Activated CD4-positive, alpha-beta memory T cell treated with anti-CD3 and anti-CD28 coated beads for 36 hours (primary cell): ENCODE measurements at regions of chr2 and their contacts with region 1.

Region 1: DNA sequence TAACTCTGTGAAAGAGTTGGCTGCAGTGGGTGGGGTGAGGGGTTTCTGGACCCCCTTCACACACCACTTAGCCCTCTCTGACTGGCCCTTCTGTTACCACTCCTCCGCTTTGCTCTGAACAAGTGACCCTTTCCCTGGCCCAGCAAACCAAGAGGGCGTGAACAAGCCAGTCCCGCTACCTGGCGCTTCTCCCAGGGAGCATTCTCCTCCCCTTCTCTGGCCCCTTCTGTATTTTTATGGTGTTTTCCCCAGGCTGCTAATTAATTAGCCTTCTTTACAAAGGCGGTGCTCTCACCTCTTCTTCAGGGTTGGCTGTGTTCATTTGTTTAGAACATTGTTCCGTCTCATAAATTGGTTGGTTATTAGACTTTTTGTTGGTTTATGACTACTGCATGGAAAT is 180.1 kb downstream of the MGAT5 start:
- DNase-seq: no peak
- H3K4me3 Mint-ChIP-seq: no peak overlapping the region
- H3K27ac Mint-ChIP-seq: no peak overlapping the region
- H3K4me1 Mint-ChIP-seq: no peaks in the 10 kb centered on the region
- H3K27me3 Mint-ChIP-seq: no peaks in the 10 kb centered on the region

Region 2: DNA sequence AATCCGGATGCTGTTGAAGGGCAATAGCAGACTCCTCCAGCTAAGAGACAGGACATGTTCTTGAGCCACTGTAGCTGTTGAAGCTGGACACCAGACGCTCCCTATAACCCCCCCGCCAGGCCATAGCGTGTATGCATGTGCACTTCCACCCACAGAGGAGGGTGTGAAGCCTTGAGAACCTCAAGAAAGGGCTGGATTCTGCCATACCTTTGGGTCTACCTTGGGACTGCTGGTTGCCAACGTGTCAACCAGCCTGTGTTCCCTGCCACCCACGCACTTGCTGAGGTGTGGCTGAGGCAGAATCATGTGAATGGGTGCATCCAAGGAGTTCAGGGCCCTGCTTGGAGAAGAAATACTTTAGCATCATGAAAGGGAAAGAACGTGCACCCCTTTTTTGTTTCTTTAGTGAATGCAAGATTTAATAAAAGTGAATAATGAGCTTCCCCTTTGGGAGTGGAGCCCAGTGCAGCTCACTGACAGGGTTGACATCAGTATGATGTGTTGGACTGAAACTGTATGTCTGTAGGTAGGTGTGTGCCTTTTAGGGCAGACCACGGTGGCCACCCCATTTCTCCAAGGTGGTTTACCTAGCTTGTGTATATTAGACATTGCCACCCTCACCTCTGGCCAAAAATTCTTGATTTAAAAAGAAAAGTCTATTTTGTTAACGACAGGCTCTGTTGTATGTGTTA is 18.2 kb after region 1 on chr2:
- CTCF ChIA-PET with region 1: interaction called, 10 read pairs
- POLR2A ChIA-PET with region 1: no interaction called
- intact Hi-C with region 1: no loop called
- DNase-seq: no peak
- H3K4me3 Mint-ChIP-seq: no peak overlapping the region
- H3K27ac Mint-ChIP-seq: no peak overlapping the region
- H3K4me1 Mint-ChIP-seq: no peaks in the 10 kb centered on the region
- H3K27me3 Mint-ChIP-seq: no peaks in the 10 kb centered on the region

Region 3: GRCh38 chr2:134727385-134727784 is 293.4 kb after region 1 on chr2:
- CTCF ChIA-PET with region 1: no interaction called
- POLR2A ChIA-PET with region 1: no interaction called
- intact Hi-C with region 1: no loop called
- DNase-seq: no peak
- H3K4me3 Mint-ChIP-seq: no peak overlapping the region
- H3K27ac Mint-ChIP-seq: no peak overlapping the region
- H3K4me1 Mint-ChIP-seq: no peaks in the 10 kb centered on the region
- H3K27me3 Mint-ChIP-seq: peaks cover 5% of the 10 kb centered on the region

Region 4: GRCh38 chr2:135349941-135350340 is 916.0 kb after region 1 on chr2:
- CTCF ChIA-PET with region 1: no interaction called
- POLR2A ChIA-PET with region 1: no interaction called
- intact Hi-C with region 1: no loop called
- DNase-seq: no peak
- H3K4me3 Mint-ChIP-seq: no peak overlapping the region
- H3K27ac Mint-ChIP-seq: no peak overlapping the region
- H3K4me1 Mint-ChIP-seq: no peaks in the 10 kb centered on the region
- H3K27me3 Mint-ChIP-seq: no peaks in the 10 kb centered on the region